Activated CD4-positive, alpha-beta T cell treated with anti-CD3 and anti-CD28 coated beads, Interleukin-2, amount 10 ng/mL, durations not matched to agents 24 days and 14 days (primary cell): ENCODE measurements at regions of chr19 and their contacts with region 1.

Region 1: GRCh38 chr19:33186431-33187182 is 7.5 kb upstream of the LRP3 start:
- DNase-seq: no peak
- H3K4me3 Mint-ChIP-seq: no peak overlapping the region
- H3K27ac Mint-ChIP-seq: no peak overlapping the region
- H3K4me1 Mint-ChIP-seq: no peaks in the 10 kb centered on the region
- H3K27me3 Mint-ChIP-seq: peaks cover 12% of the 10 kb centered on the region

Region 2: DNA sequence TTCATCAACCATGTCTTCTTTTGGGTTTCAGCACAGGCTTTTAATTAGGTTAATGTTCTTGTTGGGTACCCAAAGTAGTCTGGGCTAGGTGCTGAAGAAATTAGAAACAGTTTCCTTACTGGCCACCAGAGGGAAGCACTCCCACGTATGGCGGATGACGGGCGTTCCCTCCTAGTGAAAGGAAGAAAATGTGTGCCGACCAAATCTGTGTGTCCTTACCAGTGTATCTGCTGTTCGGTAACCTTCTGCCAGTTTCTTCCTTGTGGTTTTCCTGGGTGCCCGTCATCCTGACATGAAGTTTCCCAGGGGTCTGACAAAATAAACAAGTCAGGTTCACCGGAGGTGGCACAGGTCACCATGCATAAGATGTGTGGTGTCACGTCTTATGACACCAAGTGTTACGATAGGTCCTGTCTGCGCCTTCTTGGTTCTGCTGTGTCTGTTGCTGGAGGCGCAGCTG is 60.6 kb before region 1 on chr19:
- intact Hi-C with region 1: loop called (anchors 1 kb)
- DNase-seq: peak; percentile 85
- H3K4me3 Mint-ChIP-seq: no peak overlapping the region
- H3K27ac Mint-ChIP-seq: no peak overlapping the region
- H3K4me1 Mint-ChIP-seq: peaks cover 4% of the 10 kb centered on the region
- H3K27me3 Mint-ChIP-seq: no peaks in the 10 kb centered on the region

Region 3: GRCh38 chr19:33143897-33144405 is 42.7 kb before region 1 on chr19:
- intact Hi-C with region 1: loop called (anchors 1 kb)
- DNase-seq: peak; percentile 90
- H3K4me3 Mint-ChIP-seq: no peak overlapping the region
- H3K27ac Mint-ChIP-seq: no peak overlapping the region
- H3K4me1 Mint-ChIP-seq: peaks cover 4% of the 10 kb centered on the region
- H3K27me3 Mint-ChIP-seq: peaks cover 2% of the 10 kb centered on the region